ENCODE measurements at regions of chr2 and their contacts with region 1.

Region 1: GRCh38 chr2:27071277-27071989 is at the start of gene OST4:
- DNase-seq: peak; percentile 97 to 98
- ATAC-seq: peak; percentile 96
- H3K4me3 ChIP-seq: peak within 1 kb of the TSS; percentile 50 to 76
- H3K27ac ChIP-seq: peak within 1 kb of the TSS; percentile 83 to 90
- H3K4me1 ChIP-seq: no peaks in the 10 kb centered on the region
- H3K27me3 ChIP-seq: no peaks in the 10 kb centered on the region
- total RNA-seq, gene OST4: 219 to 260 TPM

Region 2: GRCh38 chr2:27050281-27050995 is 21.0 kb before region 1 on chr2:
- intact Hi-C with region 1: loop called in 1 of 2 experiments (anchors 2 kb)
- DNase-seq: peak; percentile 87 to 95
- ATAC-seq: peak; percentile 94
- H3K4me3 ChIP-seq: peak overlapping the region; percentile 58 to 62
- H3K27ac ChIP-seq: peak overlapping the region in 1 of 2 donors; percentile 49
- H3K4me1 ChIP-seq: no peaks in the 10 kb centered on the region
- H3K27me3 ChIP-seq: no peaks in the 10 kb centered on the region

Region 3: GRCh38 chr2:27703638-27704341 is 632.4 kb after region 1 on chr2:
- intact Hi-C with region 1: no loop called
- DNase-seq: peak; percentile 88 to 90
- ATAC-seq: peak; percentile 77
- H3K4me3 ChIP-seq: no peak overlapping the region
- H3K27ac ChIP-seq: peak overlapping the region; percentile 42 to 93
- H3K4me1 ChIP-seq: peaks cover 2 to 5% of the 10 kb centered on the region in 2 donors
- H3K27me3 ChIP-seq: no peaks in the 10 kb centered on the region

Measured in aorta (tissue), 5 donors.